ENCODE measurements at regions of chr1 and their contacts with region 1.

Region 1: DNA sequence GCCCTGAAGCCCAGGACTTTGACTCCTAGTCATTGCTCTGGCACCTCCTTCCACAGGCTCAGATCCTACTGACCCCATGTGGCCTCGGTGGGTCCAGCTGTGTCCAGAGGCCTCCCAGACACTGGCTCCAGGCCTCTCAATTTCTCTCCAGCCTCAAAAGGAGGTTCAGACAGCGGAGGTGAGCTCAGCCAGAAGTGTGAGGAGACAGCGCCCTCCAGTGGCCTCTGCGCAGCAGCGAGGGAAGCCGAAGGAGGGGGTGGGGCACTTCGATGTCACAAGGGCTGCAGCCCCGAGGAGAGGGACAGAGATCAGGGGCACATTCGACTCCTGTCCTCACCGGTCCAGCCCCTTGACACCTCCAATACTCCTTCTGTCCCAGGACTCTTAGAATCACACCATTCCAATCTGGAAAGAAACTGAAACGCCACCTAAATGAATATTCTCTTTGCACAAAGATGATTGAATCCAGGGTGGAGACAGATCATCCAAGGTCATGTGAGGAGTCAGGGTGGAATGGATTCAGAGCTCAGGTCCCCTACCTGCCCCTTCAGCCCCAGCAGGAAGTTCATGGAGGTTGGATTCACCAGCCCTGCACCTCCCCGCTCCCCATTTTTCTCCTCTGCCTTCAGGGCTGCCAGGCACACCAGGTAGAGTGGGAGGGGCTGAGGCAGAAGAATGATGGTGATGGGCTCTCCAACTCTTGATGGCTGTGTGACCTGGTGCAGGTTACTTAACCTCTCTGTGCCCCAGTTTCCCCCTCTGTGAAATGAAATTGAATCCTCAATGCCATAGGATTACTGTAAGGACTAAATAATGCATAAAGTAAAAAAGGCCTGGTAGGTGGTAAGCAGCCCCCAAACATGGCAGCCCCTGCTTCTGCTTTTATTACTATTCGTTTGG is 34.8 kb upstream of the ZBTB40 start:
- DNase-seq: peak; percentile 92
- H3K4me3 Mint-ChIP-seq: no peak overlapping the region
- H3K27ac Mint-ChIP-seq: no peak overlapping the region
- H3K4me1 Mint-ChIP-seq: peaks cover 4% of the 10 kb centered on the region
- H3K27me3 Mint-ChIP-seq: peaks cover 34% of the 10 kb centered on the region

Region 2: GRCh38 chr1:22641906-22642636 is 225.3 kb after region 1 on chr1:
- intact Hi-C with region 1: loop called (anchors 1 kb)
- DNase-seq: peak; percentile 90
- H3K4me3 Mint-ChIP-seq: no peak overlapping the region
- H3K27ac Mint-ChIP-seq: no peak overlapping the region
- H3K4me1 Mint-ChIP-seq: no peaks in the 10 kb centered on the region
- H3K27me3 Mint-ChIP-seq: no peaks in the 10 kb centered on the region

Measured in activated CD4-positive, alpha-beta T cell treated with anti-CD3 and anti-CD28 coated beads, Interleukin-2, amount 10 ng/mL, durations not matched to agents 24 days and 14 days (primary cell).